ENCODE measurements at regions of chr4 and their contacts with region 1.

Region 1: GRCh38 chr4:112775801-112776200 is 138.9 kb downstream of the LARP7 start:
- DNase-seq: no peak
- H3K4me3 ChIP-seq: no peak overlapping the region
- H3K27ac ChIP-seq: no peak overlapping the region
- H3K4me1 ChIP-seq: no peaks in the 10 kb centered on the region
- H3K27me3 ChIP-seq: no peaks in the 10 kb centered on the region
- CTCF ChIP-seq: no peak
- POLR2A ChIP-seq: no peak

Region 2: GRCh38 chr4:110865611-110866259 is 1910.1 kb before region 1 on chr4:
- intact Hi-C with region 1: no loop called
- DNase-seq: no peak
- H3K4me3 ChIP-seq: no peak overlapping the region
- H3K27ac ChIP-seq: no peak overlapping the region
- H3K4me1 ChIP-seq: no peaks in the 10 kb centered on the region
- H3K27me3 ChIP-seq: no peaks in the 10 kb centered on the region
- CTCF ChIP-seq: no peak
- POLR2A ChIP-seq: no peak

Region 3: DNA sequence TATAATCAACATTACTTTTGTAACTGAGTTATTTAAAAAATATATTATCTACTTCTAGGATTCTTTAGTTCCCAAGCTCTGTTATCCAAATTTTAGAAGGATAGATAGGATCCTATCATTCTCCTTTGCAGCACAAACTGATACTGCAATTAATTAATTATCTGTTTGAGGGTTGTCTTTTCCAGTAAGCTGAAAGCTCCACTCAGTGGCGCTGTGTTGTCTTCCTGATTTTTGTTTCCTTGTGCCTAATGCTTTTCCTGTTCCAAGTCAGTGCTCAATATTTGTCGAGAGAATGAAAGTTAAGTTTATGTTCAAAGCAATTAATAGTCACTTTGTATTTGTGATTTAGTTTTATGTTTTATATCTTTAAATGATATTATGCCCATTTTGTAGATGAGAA is 166.3 kb after region 1 on chr4:
- intact Hi-C with region 1: loop called (anchors 10 kb)
- DNase-seq: no peak
- H3K4me3 ChIP-seq: no peak overlapping the region
- H3K27ac ChIP-seq: no peak overlapping the region
- H3K4me1 ChIP-seq: no peaks in the 10 kb centered on the region
- H3K27me3 ChIP-seq: no peaks in the 10 kb centered on the region
- CTCF ChIP-seq: no peak
- POLR2A ChIP-seq: no peak